ENCODE measurements at regions of chr11 and their contacts with region 1.

Region 1: GRCh38 chr11:19742588-19743292 is 30.1 kb downstream of the NAV2 start:
- DNase-seq: no peak
- ATAC-seq: peak; percentile 99
- H3K4me3 ChIP-seq: no peak overlapping the region
- H3K27ac ChIP-seq: no peak overlapping the region
- H3K4me1 ChIP-seq: no peaks in the 10 kb centered on the region
- H3K27me3 ChIP-seq: no peaks in the 10 kb centered on the region
- CTCF ChIP-seq: peak; percentile 74 to 80 (median 75)
- EP300 ChIP-seq: no peak
- POLR2A ChIP-seq: no peak
- RAD21 ChIP-seq: peak; percentile 85

Region 2: DNA sequence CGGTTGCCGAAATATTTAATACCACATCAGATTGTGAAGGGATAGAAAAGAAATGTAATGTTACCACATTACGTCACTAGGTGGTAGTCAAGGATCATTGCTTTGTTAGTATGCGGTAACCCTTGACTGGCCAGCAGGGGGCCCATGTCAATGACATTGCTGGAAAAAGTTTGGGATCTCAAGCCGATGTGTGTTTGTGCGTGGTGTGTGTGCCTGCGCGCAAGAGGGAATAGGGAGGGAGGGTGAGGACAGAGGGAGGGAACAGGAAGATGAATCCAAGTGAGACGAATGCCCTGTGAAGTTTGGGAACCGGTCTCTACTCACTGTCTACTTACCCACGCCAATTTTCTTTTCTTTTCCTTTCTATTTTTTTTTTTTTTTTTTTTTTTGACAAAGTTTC is 671.5 kb before region 1 on chr11:
- CTCF ChIA-PET with region 1: interaction called, 3 read pairs
- POLR2A ChIA-PET with region 1: no interaction called
- RAD21 ChIA-PET with region 1: no interaction called
- SMC1A ChIA-PET with region 1: no interaction called
- in situ Hi-C with region 1: no loop called
- intact Hi-C with region 1: loop called (anchors 5 kb)
- DNase-seq: peak; percentile 48
- ATAC-seq: peak; percentile 96
- H3K4me3 ChIP-seq: no peak overlapping the region
- H3K27ac ChIP-seq: no peak overlapping the region
- H3K4me1 ChIP-seq: no peaks in the 10 kb centered on the region
- H3K27me3 ChIP-seq: peaks cover 0 to 2% of the 10 kb centered on the region in 2 experiments; a peak in 2 of 4 replicates
- CTCF ChIP-seq: peak; percentile 93 to 99 (median 99)
- EP300 ChIP-seq: no peak
- POLR2A ChIP-seq: no peak
- RAD21 ChIP-seq: peak; percentile 85

Region 3: GRCh38 chr11:19311308-19312030 is 431.3 kb before region 1 on chr11:
- CTCF ChIA-PET with region 1: no interaction called
- POLR2A ChIA-PET with region 1: no interaction called
- RAD21 ChIA-PET with region 1: no interaction called
- SMC1A ChIA-PET with region 1: no interaction called
- in situ Hi-C with region 1: loop called (anchors 25 kb)
- intact Hi-C with region 1: loop called (anchors 5 kb)
- DNase-seq: peak; percentile 19
- ATAC-seq: peak; percentile 92
- H3K4me3 ChIP-seq: no peak overlapping the region
- H3K27ac ChIP-seq: no peak overlapping the region
- H3K4me1 ChIP-seq: peaks cover 6% of the 10 kb centered on the region; the same call in 1 of the 2 replicates
- H3K27me3 ChIP-seq: no peaks in the 10 kb centered on the region
- CTCF ChIP-seq: peak; percentile 75 to 86 (median 79)
- EP300 ChIP-seq: no peak
- POLR2A ChIP-seq: no peak
- RAD21 ChIP-seq: peak; percentile 81

Region 4: DNA sequence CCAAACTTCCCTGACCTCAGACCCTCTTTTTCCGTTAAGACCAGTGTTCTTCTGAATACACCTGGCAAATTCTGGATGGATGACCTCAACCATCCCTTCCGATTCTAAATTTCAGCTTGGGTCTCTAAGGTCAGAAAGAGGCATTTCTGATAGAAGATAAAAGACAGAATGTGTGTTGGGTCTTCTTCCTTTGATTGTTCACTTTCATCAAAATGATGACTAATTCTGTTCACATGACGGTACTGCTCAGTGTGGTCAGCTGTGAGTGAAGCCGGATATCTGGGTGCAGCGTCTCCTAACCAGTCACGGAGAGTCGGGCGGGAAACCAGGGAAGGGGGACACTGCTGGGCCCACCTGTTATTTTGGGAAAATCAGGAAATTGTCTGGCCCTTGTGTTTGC is 181.7 kb before region 1 on chr11:
- CTCF ChIA-PET with region 1: interaction called, 61 read pairs
- POLR2A ChIA-PET with region 1: no interaction called
- RAD21 ChIA-PET with region 1: interaction called, 31 read pairs
- SMC1A ChIA-PET with region 1: interaction called, 41 read pairs
- in situ Hi-C with region 1: loop called (anchors 5 kb)
- intact Hi-C with region 1: loop called (anchors 1 kb)
- DNase-seq: no peak
- ATAC-seq: no peak
- H3K4me3 ChIP-seq: no peak overlapping the region
- H3K27ac ChIP-seq: no peak overlapping the region
- H3K4me1 ChIP-seq: no peaks in the 10 kb centered on the region
- H3K27me3 ChIP-seq: no peaks in the 10 kb centered on the region; a peak in 1 of 4 replicates
- CTCF ChIP-seq: no peak
- EP300 ChIP-seq: no peak
- POLR2A ChIP-seq: no peak
- RAD21 ChIP-seq: no peak

Region 5: GRCh38 chr11:19753451-19754106 is 10.8 kb after region 1 on chr11:
- CTCF ChIA-PET with region 1: interaction called, 11 read pairs
- POLR2A ChIA-PET with region 1: no interaction called
- RAD21 ChIA-PET with region 1: interaction called, 3 read pairs
- SMC1A ChIA-PET with region 1: interaction called, 3 read pairs
- in situ Hi-C with region 1: no loop called
- intact Hi-C with region 1: no loop called
- DNase-seq: no peak
- ATAC-seq: no peak
- H3K4me3 ChIP-seq: no peak overlapping the region
- H3K27ac ChIP-seq: no peak overlapping the region
- H3K4me1 ChIP-seq: no peaks in the 10 kb centered on the region
- H3K27me3 ChIP-seq: no peaks in the 10 kb centered on the region; a peak in 1 of 4 replicates
- CTCF ChIP-seq: no peak
- EP300 ChIP-seq: no peak
- POLR2A ChIP-seq: no peak
- RAD21 ChIP-seq: no peak

Region 6: DNA sequence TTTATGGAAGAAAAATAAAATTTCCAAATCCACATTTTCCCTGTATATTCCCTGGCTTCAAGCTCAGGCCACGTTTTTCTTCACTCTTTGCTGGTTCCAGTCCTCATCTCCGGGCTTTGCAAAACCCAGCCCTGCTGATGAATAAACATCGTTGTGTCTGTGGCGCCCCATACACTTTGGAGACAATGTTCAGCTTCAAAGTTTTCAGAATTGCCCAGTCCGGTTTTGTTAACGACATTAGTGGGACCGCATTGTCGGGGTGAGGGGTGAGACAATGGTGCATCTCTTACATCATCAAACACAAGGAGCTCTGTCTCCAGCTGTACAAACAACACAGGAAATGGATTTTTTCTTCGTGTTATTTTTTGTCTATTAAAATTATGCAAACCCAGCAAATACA is 567.4 kb after region 1 on chr11:
- CTCF ChIA-PET with region 1: no interaction called
- POLR2A ChIA-PET with region 1: no interaction called
- RAD21 ChIA-PET with region 1: no interaction called
- SMC1A ChIA-PET with region 1: no interaction called
- in situ Hi-C with region 1: no loop called
- intact Hi-C with region 1: no loop called
- DNase-seq: no peak
- ATAC-seq: no peak
- H3K4me3 ChIP-seq: no peak overlapping the region
- H3K27ac ChIP-seq: no peak overlapping the region
- H3K4me1 ChIP-seq: no peaks in the 10 kb centered on the region
- H3K27me3 ChIP-seq: no peaks in the 10 kb centered on the region
- CTCF ChIP-seq: no peak
- EP300 ChIP-seq: no peak
- POLR2A ChIP-seq: no peak
- RAD21 ChIP-seq: no peak

Measured in GM12878 (cell line).